MCF 10A (cell line): ENCODE measurements at regions of chr11 and their contacts with region 1.

Region 1: GRCh38 chr11:12235947-12236743 is 125.8 kb downstream of the MICAL2 start:
- DNase-seq: peak; percentile 73
- H3K4me3 Mint-ChIP-seq: no peak overlapping the region
- H3K27ac Mint-ChIP-seq: peak overlapping the region; percentile 55
- H3K4me1 Mint-ChIP-seq: peaks cover 16% of the 10 kb centered on the region
- H3K27me3 Mint-ChIP-seq: no peaks in the 10 kb centered on the region
- CTCF ChIP-seq: peak; percentile 72

Region 2: DNA sequence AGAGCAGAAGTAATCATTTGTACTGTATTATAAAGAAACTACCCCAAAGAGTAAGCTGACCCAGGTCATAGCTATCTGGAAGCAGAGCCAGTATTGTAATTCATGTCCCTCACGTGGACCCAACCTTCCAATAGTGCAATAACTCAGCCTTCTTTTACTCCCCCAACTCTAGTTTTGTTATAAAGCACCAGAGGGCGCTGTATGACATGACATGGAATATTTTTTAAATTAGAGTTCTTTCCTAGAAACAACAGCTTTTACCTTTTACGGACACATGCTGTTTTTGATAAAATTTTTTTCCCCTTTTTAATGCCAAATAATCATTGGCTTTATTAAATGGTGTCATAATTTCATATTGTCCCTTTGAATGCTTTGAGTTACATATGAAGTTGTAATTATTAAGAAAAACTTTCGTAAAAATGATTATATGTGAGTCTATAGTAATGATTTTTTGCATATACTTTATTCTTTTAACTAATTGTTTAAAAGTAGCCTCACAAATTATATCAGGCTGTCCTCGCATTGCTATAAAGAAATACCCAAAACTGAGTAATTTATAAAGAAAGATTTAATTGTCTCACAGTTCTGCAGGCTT is 304.6 kb before region 1 on chr11:
- CTCF ChIA-PET with region 1: interaction called, 6 read pairs
- POLR2A ChIA-PET with region 1: no interaction called
- intact Hi-C with region 1: loop called (anchors 5 kb)
- DNase-seq: peak; percentile 80
- H3K4me3 Mint-ChIP-seq: no peak overlapping the region
- H3K27ac Mint-ChIP-seq: no peak overlapping the region
- H3K4me1 Mint-ChIP-seq: no peaks in the 10 kb centered on the region
- H3K27me3 Mint-ChIP-seq: no peaks in the 10 kb centered on the region
- CTCF ChIP-seq: peak; percentile 80

Region 3: GRCh38 chr11:12066799-12067508 is 169.2 kb before region 1 on chr11:
- CTCF ChIA-PET with region 1: interaction called, 14 read pairs
- POLR2A ChIA-PET with region 1: no interaction called
- intact Hi-C with region 1: no loop called
- DNase-seq: peak; percentile 82
- H3K4me3 Mint-ChIP-seq: peak overlapping the region; percentile 49
- H3K27ac Mint-ChIP-seq: peak overlapping the region; percentile 95
- H3K4me1 Mint-ChIP-seq: peaks cover 53% of the 10 kb centered on the region
- H3K27me3 Mint-ChIP-seq: no peaks in the 10 kb centered on the region
- CTCF ChIP-seq: no peak

Region 4: GRCh38 chr11:12110201-12110713 is 125.9 kb before region 1 on chr11 and contains the start of gene MICAL2:
- CTCF ChIA-PET with region 1: interaction called, 7 read pairs
- POLR2A ChIA-PET with region 1: interaction called, 5 read pairs
- intact Hi-C with region 1: loop called (anchors 1 kb)
- DNase-seq: peak; percentile 88
- H3K4me3 Mint-ChIP-seq: peak within 1 kb of the TSS; percentile 79
- H3K27ac Mint-ChIP-seq: peak within 1 kb of the TSS; percentile 61
- H3K4me1 Mint-ChIP-seq: peaks cover 29% of the 10 kb centered on the region
- H3K27me3 Mint-ChIP-seq: no peaks in the 10 kb centered on the region
- CTCF ChIP-seq: no peak
- total RNA-seq, gene MICAL2: 151 and 154 TPM in 2 replicates

Region 5: GRCh38 chr11:12167098-12168000 is 68.8 kb before region 1 on chr11:
- CTCF ChIA-PET with region 1: interaction called, 18 read pairs
- POLR2A ChIA-PET with region 1: no interaction called
- intact Hi-C with region 1: no loop called
- DNase-seq: peak; percentile 93
- H3K4me3 Mint-ChIP-seq: no peak overlapping the region
- H3K27ac Mint-ChIP-seq: peak overlapping the region; percentile 8
- H3K4me1 Mint-ChIP-seq: peaks cover 49% of the 10 kb centered on the region
- H3K27me3 Mint-ChIP-seq: no peaks in the 10 kb centered on the region
- CTCF ChIP-seq: no peak

Region 6: DNA sequence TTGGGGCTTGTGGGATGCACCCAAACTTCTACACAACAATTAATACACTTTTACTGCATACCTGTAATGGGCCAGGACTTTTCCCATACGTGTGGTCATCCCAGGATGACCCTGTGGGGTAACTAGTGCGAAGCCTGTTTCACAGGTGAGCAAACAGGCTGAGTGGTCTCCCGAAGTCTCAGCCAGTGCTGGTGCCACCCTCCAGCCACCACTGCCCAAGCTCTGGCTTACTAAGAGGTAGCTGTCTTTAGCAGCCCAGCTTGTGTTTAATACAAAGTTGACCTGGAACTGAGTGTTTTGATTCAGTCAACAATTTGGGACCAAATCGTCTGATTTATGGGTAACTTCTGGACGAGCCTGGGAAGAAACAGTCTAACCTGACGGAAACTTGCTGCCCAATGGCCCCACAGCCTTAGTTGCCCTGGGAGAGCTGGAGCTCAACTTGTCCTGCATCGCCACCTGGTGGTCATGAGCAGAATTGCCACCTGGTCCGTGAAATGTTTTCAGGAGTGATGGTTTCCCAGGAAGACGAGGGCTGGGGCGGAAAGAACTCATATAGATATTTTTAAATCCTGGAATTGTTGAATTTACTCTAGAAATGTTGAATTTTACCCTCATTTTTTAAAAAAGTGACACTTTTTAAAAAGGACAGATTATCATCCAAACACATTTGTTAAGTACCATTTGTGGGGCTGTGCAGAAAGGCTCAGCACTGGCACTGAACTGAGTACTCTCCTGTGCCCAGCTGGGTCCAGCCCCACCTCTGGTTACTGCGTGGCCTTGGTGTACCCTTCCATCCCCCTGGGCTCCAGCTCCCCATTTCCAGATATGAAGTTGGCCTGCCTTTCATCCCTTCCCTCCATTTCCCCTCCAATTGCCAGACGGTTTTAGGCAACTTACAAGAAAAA is 45.7 kb after region 1 on chr11:
- CTCF ChIA-PET with region 1: interaction called, 21 read pairs
- POLR2A ChIA-PET with region 1: no interaction called
- intact Hi-C with region 1: loop called (anchors 5 kb)
- DNase-seq: peak; percentile 83
- H3K4me3 Mint-ChIP-seq: no peak overlapping the region
- H3K27ac Mint-ChIP-seq: no peak overlapping the region
- H3K4me1 Mint-ChIP-seq: peaks cover 31% of the 10 kb centered on the region
- H3K27me3 Mint-ChIP-seq: no peaks in the 10 kb centered on the region
- CTCF ChIP-seq: peak; percentile 95

Region 7: GRCh38 chr11:12673924-12674570 is 437.9 kb after region 1 on chr11 and contains the start of gene TEAD1:
- CTCF ChIA-PET with region 1: no interaction called
- POLR2A ChIA-PET with region 1: no interaction called
- intact Hi-C with region 1: no loop called
- DNase-seq: peak; percentile 91
- H3K4me3 Mint-ChIP-seq: peak within 1 kb of the TSS; percentile 90
- H3K27ac Mint-ChIP-seq: peak within 1 kb of the TSS; percentile 92
- H3K4me1 Mint-ChIP-seq: peaks cover 25% of the 10 kb centered on the region
- H3K27me3 Mint-ChIP-seq: no peaks in the 10 kb centered on the region
- CTCF ChIP-seq: no peak
- total RNA-seq, gene TEAD1: 91.0 and 123 TPM in 2 replicates